B cell (primary cell): ENCODE measurements at regions of chr7 and their contacts with region 1.

Region 1: GRCh38 chr7:44240983-44241510 is 40.3 kb downstream of the YKT6 start:
- DNase-seq: peak; percentile 77
- ATAC-seq: peak; percentile 82
- H3K4me3 ChIP-seq: peak overlapping the region in 3 of 5 experiments; percentile 29 to 44 (median 31)
- H3K4me3 Mint-ChIP-seq: peak overlapping the region; percentile 68
- H3K27ac ChIP-seq: no peak overlapping the region
- H3K27ac Mint-ChIP-seq: peak overlapping the region; percentile 26
- H3K4me1 ChIP-seq: peaks cover 3 to 7% of the 10 kb centered on the region in 2 donors
- H3K4me1 Mint-ChIP-seq: peaks cover 3% of the 10 kb centered on the region
- H3K27me3 ChIP-seq: no peaks in the 10 kb centered on the region
- H3K27me3 Mint-ChIP-seq: peaks cover 3% of the 10 kb centered on the region
- CTCF ChIP-seq: peak; percentile 69

Region 2: GRCh38 chr7:44257618-44258422 is 16.8 kb after region 1 on chr7:
- CTCF ChIA-PET with region 1: interaction called, 11 read pairs
- POLR2A ChIA-PET with region 1: no interaction called
- intact Hi-C with region 1: no loop called
- DNase-seq: peak; percentile 67
- ATAC-seq: peak; percentile 73
- H3K4me3 ChIP-seq: peak overlapping the region in 1 of 5 experiments; percentile 39
- H3K4me3 Mint-ChIP-seq: peak overlapping the region; percentile 77
- H3K27ac ChIP-seq: peak overlapping the region; percentile 39 to 58
- H3K27ac Mint-ChIP-seq: peak overlapping the region; percentile 46
- H3K4me1 ChIP-seq: peaks cover 24 to 34% of the 10 kb centered on the region in 2 donors
- H3K4me1 Mint-ChIP-seq: peaks cover 29% of the 10 kb centered on the region
- H3K27me3 ChIP-seq: no peaks in the 10 kb centered on the region
- H3K27me3 Mint-ChIP-seq: no peaks in the 10 kb centered on the region
- CTCF ChIP-seq: no peak

Region 3: GRCh38 chr7:44565097-44565794 is 324.2 kb after region 1 on chr7:
- CTCF ChIA-PET with region 1: interaction called, 42 read pairs
- POLR2A ChIA-PET with region 1: no interaction called
- intact Hi-C with region 1: loop called (anchors 1 kb)
- DNase-seq: peak; percentile 73
- ATAC-seq: peak; percentile 98
- H3K4me3 ChIP-seq: no peak overlapping the region
- H3K4me3 Mint-ChIP-seq: no peak overlapping the region
- H3K27ac ChIP-seq: no peak overlapping the region
- H3K27ac Mint-ChIP-seq: no peak overlapping the region
- H3K4me1 ChIP-seq: no peaks in the 10 kb centered on the region
- H3K4me1 Mint-ChIP-seq: no peaks in the 10 kb centered on the region
- H3K27me3 ChIP-seq: no peaks in the 10 kb centered on the region
- H3K27me3 Mint-ChIP-seq: no peaks in the 10 kb centered on the region
- CTCF ChIP-seq: peak; percentile 98